ENCODE measurements at regions of chr12 and their contacts with region 1.

Region 1: DNA sequence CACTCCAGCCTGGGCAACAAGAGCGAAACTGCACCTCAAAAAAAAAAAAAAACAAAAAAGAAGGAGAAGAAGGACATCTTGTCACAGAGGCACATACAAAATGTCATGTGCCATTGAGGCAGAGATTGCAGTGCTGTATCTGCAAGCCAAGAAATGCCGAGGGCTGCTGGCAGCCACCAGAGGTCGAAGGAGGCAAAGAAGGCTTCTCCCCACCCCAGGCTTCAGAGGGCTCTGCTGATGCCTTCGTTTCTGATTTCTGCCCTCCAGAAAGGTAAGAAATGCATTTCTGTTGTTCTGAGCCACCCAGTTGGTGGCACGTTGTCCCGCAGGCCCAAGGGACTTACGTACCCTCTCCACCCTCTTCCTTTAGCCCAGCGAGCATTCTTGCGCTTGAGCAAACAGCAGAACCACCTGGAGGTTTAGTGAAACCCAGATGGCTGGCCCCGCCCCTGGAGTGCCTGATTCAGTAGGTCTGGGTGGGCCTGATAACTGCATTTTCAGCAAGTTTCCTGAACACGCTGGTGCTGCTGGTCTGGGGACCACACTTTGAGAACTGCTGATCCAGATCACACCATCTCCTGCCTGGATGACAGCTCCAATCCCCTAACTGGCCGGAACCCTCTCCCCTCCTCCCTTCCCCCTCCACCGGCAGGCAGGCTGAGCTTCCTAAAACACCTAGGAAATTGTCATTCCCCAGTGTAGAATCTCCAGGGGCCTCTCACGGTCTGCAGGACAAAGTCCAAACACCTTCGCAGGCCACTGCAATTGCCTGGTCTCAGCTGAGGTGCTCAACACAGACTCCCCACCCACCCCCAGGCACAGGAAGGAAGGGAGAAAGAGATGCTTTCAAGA is 21.1 kb upstream of the SCARB1 start:
- DNase-seq: peak; percentile 99
- H3K4me3 ChIP-seq: peak overlapping the region; percentile 50
- H3K27ac ChIP-seq: peak overlapping the region; percentile 95
- H3K4me1 ChIP-seq: peaks cover 75% of the 10 kb centered on the region
- CTCF ChIP-seq: peak; percentile 43

Region 2: GRCh38 chr12:124870515-124870914 is 14.3 kb before region 1 on chr12:
- CTCF ChIA-PET with region 1: interaction called, 11 read pairs
- POLR2A ChIA-PET with region 1: interaction called, 5 read pairs
- intact Hi-C with region 1: no loop called
- DNase-seq: no peak
- H3K4me3 ChIP-seq: no peak overlapping the region
- H3K27ac ChIP-seq: no peak overlapping the region
- H3K4me1 ChIP-seq: peaks cover 25% of the 10 kb centered on the region
- CTCF ChIP-seq: no peak

Region 3: GRCh38 chr12:124898200-124898922 is 13.5 kb after region 1 on chr12:
- CTCF ChIA-PET with region 1: interaction called, 5 read pairs
- POLR2A ChIA-PET with region 1: interaction called, 102 read pairs
- intact Hi-C with region 1: loop called (anchors 1 kb)
- DNase-seq: peak; percentile 86
- H3K4me3 ChIP-seq: peak overlapping the region; percentile 40
- H3K27ac ChIP-seq: peak overlapping the region; percentile 32
- H3K4me1 ChIP-seq: peaks cover 65% of the 10 kb centered on the region
- CTCF ChIP-seq: peak; percentile 93

Region 4: DNA sequence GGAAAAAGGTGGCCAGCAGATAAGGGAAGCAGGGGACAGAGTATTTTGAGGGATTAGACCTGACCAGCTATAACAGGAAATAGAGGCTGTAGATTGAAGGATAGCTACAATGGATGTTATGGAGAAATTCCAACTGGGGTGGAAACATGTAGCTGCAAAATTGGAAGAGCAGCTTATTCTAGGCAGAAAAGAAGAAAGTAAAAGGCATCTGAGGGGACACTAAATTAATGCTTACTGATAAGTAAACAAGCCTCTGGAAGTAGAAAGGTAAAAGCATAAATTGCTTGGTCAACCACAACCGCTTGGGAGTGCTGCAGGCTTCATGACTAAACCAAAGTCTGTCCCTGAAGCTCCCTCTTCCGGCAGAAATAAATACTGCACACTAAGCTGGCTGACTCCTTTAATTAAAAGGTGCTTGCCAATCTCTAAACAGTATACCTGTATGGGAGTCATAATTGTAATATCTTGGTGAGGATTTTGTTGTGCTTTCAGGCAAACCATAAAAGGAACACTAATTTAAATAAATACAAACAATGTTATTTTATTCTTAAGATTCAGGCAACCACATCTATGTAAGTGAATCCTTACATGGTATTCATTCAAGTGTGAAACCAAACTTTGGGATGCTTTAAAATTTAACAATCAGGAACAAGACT is 21.9 kb after region 1 on chr12:
- CTCF ChIA-PET with region 1: interaction called, 3 read pairs
- POLR2A ChIA-PET with region 1: interaction called, 102 read pairs
- intact Hi-C with region 1: no loop called
- DNase-seq: peak; percentile 96
- H3K4me3 ChIP-seq: peak overlapping the region; percentile 6
- H3K27ac ChIP-seq: peak overlapping the region; percentile 23
- H3K4me1 ChIP-seq: peaks cover 65% of the 10 kb centered on the region
- CTCF ChIP-seq: peak; percentile 100

Region 5: DNA sequence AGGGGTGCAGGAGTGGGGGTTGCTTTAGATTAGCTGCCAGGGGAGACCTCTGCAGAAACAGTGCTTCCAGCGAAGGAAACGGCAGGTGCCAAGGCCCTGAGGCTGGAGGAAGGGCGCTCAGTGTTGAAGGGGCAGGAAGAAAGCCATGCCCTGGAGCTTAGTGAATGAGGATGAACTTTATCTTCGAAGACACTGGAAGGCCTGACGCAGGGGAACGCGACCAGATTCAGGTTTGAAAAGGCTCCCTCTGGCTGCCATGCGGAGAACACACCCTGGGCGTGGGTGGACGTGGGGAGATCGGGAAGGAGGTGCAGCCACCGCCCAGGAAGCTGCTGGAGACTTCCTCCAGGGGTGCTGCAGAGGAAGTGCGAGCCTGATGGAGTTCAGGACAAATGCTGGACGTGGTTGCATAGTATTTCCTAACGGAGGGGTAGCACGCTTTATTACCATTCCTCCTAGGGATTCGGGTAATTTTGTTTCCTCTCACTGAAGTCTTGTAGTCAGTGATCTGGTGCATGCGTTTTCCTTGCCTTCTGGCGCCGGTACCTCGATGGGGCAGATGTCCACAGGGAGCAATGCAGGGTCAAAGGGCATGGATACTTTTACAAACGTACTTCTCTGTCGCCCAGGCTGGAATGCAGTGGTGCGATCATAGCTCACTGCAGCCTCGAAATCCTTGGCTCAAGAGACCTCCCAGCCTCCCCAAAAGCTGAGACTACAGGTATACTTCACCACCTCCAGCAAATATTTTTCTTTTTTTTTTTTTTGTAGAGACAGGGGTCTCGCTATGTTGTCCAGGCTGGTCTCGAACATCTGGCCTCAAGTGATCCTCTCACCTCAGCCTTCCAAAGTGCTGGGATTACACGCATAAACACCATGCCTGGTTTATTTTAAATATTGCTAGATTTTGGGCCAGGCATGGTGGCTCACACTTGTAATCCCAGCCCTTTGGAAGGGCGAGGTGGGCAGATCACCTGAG is 56.0 kb after region 1 on chr12:
- CTCF ChIA-PET with region 1: no interaction called
- POLR2A ChIA-PET with region 1: interaction called, 3 read pairs
- intact Hi-C with region 1: loop called (anchors 1 kb)
- DNase-seq: peak; percentile 90
- H3K4me3 ChIP-seq: peak overlapping the region; percentile 72
- H3K27ac ChIP-seq: peak overlapping the region; percentile 88
- H3K4me1 ChIP-seq: peaks cover 29% of the 10 kb centered on the region
- CTCF ChIP-seq: peak; percentile 92

Region 6: DNA sequence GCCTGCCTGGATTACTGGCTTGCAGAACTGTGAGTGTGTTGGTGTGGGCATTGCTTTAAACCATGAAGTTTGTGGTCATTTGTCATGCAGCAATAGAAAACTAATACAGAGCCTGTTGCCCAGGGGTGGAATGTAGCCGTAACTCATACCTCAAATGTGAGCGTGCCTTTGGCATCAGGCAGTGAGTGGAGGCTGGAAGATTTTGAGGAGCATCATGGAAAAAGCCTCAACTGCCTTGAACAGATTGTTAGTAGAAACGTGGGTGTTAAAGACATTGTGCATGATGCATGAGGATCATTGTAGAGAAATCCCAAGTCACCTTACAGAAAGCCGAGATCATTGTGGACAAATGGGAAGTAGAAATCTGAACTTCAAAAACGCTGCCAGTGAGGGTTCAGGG is 760.9 kb after region 1 on chr12:
- CTCF ChIA-PET with region 1: no interaction called
- POLR2A ChIA-PET with region 1: no interaction called
- intact Hi-C with region 1: no loop called
- DNase-seq: no peak
- H3K4me3 ChIP-seq: no peak overlapping the region
- H3K27ac ChIP-seq: no peak overlapping the region
- H3K4me1 ChIP-seq: no peaks in the 10 kb centered on the region
- CTCF ChIP-seq: no peak

Measured in OCI-LY7 (cell line).